Dendritic cell treated with granulocyte-macrophage colony-stimulating factor and Interleukin-4, amounts not matched to agents 40 ng/mL and 50 ng/mL, for 4 days (primary cell): ENCODE measurements at regions of chr1 and their contacts with region 1.

Region 1: DNA sequence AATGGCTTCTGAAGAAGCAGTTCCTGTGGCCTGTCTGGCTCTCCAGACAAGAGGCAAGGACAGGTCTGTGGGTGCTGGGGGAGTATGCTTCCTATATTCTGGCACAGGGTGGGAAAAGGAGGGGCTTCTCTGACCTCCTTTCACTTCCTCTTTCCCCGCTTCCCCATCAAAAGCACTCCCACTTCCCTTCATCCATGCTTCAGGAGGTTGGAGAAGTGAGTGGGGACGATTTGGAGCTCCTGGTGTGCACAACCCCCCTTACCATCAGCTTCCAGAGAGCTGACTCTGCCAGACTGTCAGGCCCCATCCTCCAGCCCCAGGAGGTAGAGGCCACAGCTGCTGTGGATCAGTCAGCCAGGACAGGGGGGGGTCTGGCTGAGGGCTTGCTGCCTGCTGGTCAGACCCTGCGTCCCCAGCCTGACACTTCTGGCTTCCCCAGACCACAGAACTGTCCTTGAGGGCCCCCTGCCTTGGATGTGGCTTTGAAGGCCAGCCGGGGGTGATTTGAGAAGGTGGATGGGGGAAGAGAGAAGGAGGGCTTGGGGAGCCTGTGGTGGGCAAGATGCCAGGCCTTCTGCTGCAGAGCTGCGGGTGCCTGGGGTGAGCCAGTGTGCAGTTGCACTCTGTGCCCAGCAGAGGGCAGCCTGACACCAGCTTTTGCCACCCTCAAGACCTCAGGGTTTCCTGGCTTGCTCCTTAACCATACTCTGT is 21.5 kb upstream of the TMEM222 start:
- H3K4me3 Mint-ChIP-seq: no peak overlapping the region
- H3K27ac Mint-ChIP-seq: peak overlapping the region; percentile 88
- H3K4me1 Mint-ChIP-seq: peaks cover 39% of the 10 kb centered on the region
- H3K27me3 Mint-ChIP-seq: no peaks in the 10 kb centered on the region

Region 2: DNA sequence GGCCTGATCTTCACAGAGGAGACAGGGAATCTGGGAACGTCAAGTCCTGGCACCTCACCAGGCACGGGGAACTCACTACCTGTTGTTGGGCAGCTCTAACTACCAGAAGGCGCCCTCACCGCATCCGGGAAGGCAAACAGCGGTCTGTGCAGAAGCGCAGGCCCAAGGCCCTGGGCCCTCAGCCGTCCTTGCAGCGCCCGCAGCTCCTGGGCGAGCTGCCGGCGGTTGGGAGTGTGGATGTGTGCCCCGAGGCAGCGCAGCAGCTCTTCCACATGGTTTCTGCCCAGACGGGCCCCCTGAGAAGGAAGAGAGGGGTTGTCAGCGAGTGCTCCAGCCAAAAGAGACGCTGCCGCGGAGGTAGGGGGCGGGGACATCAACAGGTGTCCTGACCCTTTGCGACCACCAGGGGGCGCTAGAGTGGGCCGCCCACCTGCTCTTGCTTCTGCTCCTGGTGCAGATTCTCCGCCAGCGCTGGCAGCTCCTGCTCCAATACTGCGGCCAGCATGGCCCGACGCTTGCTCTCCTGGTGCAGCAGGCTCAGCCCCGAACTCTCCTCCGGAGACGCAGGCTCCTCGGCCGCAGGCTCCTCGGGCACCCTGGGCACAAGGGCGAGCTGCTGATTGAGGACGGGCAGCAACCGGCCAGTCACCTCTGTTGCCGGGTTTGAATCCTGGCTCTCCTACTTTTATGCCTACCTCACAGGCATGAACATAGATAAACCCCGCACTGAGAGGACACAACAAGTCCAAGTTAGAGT is 57.0 kb after region 1 on chr1:
- intact Hi-C with region 1: loop called (anchors 2 kb)
- H3K4me3 Mint-ChIP-seq: no peak overlapping the region
- H3K27ac Mint-ChIP-seq: no peak overlapping the region
- H3K4me1 Mint-ChIP-seq: peaks cover 35% of the 10 kb centered on the region
- H3K27me3 Mint-ChIP-seq: peaks cover 38% of the 10 kb centered on the region

Region 3: DNA sequence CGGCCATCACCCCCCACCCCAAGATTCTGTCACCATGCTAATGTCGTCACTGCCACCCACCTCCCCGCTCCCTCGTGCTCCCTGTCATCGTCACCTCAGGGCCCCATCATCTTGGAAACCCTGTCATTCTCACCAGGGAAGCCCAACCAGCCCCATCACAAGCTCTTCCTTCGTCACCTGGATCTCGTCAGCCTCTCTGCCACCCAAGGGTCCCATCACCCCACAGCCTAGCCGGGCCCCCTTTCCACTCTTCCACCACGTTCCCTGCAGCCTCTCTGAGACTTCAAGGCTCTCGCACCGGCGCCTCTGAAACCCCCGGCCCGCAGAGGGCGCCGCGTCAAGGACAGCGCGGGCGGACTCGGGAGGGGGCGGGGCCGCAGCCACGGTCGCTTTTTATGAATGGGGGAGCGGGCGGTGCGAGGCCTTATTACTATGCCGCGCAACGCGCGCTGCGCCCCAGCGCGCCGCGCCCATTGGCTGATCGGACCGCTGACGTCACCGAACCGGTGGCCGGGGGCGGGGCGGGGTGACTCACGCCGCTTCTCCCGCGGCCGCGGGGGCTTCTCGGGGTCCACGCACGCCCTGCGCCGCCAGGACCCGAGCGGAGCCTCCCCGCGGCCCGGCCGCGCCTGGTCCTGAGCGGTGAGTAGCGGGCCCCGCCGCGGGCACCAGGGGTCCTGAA is 91.7 kb after region 1 on chr1 and contains the start of gene GPR3:
- intact Hi-C with region 1: loop called (anchors 1 kb)
- H3K4me3 Mint-ChIP-seq: peak within 1 kb of the TSS; percentile 76
- H3K27ac Mint-ChIP-seq: peak within 1 kb of the TSS; percentile 74
- H3K4me1 Mint-ChIP-seq: peaks cover 25% of the 10 kb centered on the region
- H3K27me3 Mint-ChIP-seq: peaks cover 38% of the 10 kb centered on the region

Region 4: GRCh38 chr1:27402349-27402754 is 101.9 kb after region 1 on chr1:
- intact Hi-C with region 1: no loop called
- H3K4me3 Mint-ChIP-seq: no peak overlapping the region
- H3K27ac Mint-ChIP-seq: peak overlapping the region; percentile 83
- H3K4me1 Mint-ChIP-seq: peaks cover 56% of the 10 kb centered on the region
- H3K27me3 Mint-ChIP-seq: peaks cover 2% of the 10 kb centered on the region